ENCODE measurements at regions of chr9 and their contacts with region 1.

Region 1: DNA sequence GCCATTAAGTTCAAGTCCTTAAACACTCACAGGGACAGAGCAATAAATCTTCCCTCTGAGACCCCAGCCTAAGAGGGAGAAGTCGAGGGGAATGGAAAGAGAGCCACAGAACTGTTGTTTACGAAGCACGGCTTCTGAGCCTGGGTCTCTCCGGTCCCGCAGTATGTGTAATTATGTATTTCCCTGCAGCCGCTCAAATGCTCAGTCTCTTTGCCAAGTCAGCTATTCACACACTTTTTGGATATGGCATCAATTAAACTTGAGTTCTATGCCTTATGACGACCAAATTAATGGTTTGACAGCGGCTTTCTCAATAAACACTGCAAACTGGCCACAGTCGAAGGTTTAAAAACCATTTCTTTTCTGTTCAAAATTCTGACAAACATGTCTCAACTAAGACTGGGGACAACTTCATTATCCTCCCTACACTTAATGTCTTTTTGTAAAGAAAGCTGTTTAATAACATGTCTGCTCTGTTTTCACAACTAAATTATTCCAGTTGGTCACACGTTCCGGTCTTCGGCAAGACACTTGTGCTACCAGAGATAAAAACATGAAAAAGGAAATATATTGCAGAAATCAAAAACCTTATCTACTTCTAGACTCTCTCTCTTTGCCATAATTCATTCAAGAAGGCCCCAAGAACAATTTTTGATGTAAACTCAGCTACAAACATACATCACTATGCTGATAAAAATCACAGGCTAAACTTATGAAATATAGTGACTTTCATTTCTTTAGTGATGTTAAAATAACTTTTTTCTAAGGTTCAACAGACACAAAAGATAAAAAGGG is 203.2 kb downstream of the GAPVD1 start:
- DNase-seq: no peak
- H3K4me3 ChIP-seq: no peak overlapping the region
- H3K27ac ChIP-seq: no peak overlapping the region
- H3K4me1 ChIP-seq: no peaks in the 10 kb centered on the region
- H3K27me3 ChIP-seq: no peaks in the 10 kb centered on the region
- CTCF ChIP-seq: no peak
- POLR2A ChIP-seq: no peak

Region 2: GRCh38 chr9:125361837-125362531 is 102.8 kb before region 1 on chr9:
- intact Hi-C with region 1: no loop called
- DNase-seq: no peak
- H3K4me3 ChIP-seq: no peak overlapping the region
- H3K27ac ChIP-seq: no peak overlapping the region
- H3K4me1 ChIP-seq: no peaks in the 10 kb centered on the region
- H3K27me3 ChIP-seq: no peaks in the 10 kb centered on the region
- CTCF ChIP-seq: no peak
- POLR2A ChIP-seq: no peak

Region 3: DNA sequence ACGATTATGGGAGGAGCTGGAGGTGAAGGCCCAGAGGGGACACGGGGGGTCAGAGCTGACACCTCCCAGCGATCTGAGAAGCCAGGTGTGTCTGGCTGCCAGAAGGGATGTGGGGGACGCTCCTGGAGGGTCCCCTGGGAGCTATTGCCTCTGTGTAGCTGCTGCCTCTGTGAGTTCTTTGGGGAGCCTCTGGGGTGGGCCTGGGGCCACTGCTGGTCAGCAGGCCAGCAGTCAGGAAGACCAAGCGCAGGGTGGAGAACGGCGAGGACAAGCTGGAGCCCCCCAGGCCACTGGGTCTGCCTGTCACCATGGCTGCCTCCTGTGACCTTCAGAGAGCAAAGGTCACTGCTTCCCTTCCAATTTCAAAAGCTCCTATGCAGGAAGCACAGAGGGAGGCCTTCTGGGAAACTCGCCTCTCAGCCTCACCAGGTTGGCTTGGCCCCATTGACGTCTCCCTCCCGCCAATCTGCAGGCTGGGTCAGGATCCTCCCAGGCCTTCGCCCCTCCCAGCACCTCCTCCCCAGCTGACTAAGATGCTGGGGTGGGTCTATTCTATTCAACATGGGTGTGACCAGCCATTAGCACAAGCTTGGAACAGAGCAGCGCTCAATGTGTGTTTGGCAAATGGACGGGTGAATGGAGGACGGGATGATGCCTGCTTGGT is 76.8 kb before region 1 on chr9:
- intact Hi-C with region 1: no loop called
- DNase-seq: no peak
- H3K4me3 ChIP-seq: no peak overlapping the region
- H3K27ac ChIP-seq: no peak overlapping the region
- H3K4me1 ChIP-seq: no peaks in the 10 kb centered on the region
- H3K27me3 ChIP-seq: no peaks in the 10 kb centered on the region
- CTCF ChIP-seq: no peak
- POLR2A ChIP-seq: no peak

Region 4: GRCh38 chr9:125558453-125559092 is 93.8 kb after region 1 on chr9:
- intact Hi-C with region 1: loop called (anchors 5 kb)
- DNase-seq: peak; percentile 59
- H3K4me3 ChIP-seq: no peak overlapping the region
- H3K27ac ChIP-seq: no peak overlapping the region
- H3K4me1 ChIP-seq: no peaks in the 10 kb centered on the region
- H3K27me3 ChIP-seq: no peaks in the 10 kb centered on the region
- CTCF ChIP-seq: peak; percentile 41 to 74 (median 64)
- POLR2A ChIP-seq: no peak

Region 5: DNA sequence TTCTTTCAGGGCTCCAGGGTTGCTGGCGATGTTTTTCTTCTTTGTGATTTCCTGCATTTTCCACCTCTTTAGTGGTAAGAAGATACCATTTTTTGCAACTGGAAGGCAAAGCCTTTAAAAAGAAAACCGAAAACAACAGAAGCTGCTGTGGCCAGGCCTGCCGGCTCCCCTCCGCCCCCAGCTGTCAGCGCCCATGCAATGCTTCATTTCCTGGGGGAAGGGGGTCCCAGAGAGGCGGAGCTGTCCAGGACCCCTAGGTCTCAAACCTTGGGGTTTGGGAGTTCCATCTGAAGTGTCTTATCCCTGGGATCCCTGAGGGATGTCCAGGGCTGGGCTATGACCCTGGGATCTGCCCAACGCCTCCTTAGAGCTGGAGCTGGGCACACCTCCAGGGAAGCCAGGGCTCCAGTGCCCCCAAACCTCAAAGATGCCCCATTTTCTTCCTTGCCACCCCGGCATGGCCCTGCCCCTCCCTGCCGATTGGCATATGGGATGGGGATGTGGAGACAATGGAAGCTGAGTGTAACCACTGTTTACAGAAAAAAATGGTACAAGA is 604.7 kb after region 1 on chr9:
- intact Hi-C with region 1: no loop called
- DNase-seq: no peak
- H3K4me3 ChIP-seq: no peak overlapping the region
- H3K27ac ChIP-seq: no peak overlapping the region
- H3K4me1 ChIP-seq: no peaks in the 10 kb centered on the region
- H3K27me3 ChIP-seq: peaks cover 2% of the 10 kb centered on the region
- CTCF ChIP-seq: no peak
- POLR2A ChIP-seq: no peak

Measured in prostate gland (tissue), 2 donors.